ENCODE measurements at regions of chr19 and their contacts with region 1.

Region 1: GRCh38 chr19:12156223-12157058 is at the start of gene ZNF625:
- DNase-seq: peak; percentile 51
- ATAC-seq: peak; percentile 88
- H3K4me3 ChIP-seq: peak within 1 kb of the TSS; percentile 44 to 95 (median 83)
- H3K4me3 Mint-ChIP-seq: peak within 1 kb of the TSS; percentile 95
- H3K27ac ChIP-seq: peak within 1 kb of the TSS; percentile 54 to 72
- H3K27ac Mint-ChIP-seq: peak within 1 kb of the TSS; percentile 80
- H3K4me1 ChIP-seq: peaks cover 7 to 11% of the 10 kb centered on the region in 2 donors
- H3K4me1 Mint-ChIP-seq: peaks cover 13% of the 10 kb centered on the region
- H3K27me3 ChIP-seq: no peaks in the 10 kb centered on the region
- H3K27me3 Mint-ChIP-seq: no peaks in the 10 kb centered on the region
- CTCF ChIP-seq: no peak
- total RNA-seq, gene ZNF625: 6.6 and 9.8 TPM in 2 replicates

Region 2: DNA sequence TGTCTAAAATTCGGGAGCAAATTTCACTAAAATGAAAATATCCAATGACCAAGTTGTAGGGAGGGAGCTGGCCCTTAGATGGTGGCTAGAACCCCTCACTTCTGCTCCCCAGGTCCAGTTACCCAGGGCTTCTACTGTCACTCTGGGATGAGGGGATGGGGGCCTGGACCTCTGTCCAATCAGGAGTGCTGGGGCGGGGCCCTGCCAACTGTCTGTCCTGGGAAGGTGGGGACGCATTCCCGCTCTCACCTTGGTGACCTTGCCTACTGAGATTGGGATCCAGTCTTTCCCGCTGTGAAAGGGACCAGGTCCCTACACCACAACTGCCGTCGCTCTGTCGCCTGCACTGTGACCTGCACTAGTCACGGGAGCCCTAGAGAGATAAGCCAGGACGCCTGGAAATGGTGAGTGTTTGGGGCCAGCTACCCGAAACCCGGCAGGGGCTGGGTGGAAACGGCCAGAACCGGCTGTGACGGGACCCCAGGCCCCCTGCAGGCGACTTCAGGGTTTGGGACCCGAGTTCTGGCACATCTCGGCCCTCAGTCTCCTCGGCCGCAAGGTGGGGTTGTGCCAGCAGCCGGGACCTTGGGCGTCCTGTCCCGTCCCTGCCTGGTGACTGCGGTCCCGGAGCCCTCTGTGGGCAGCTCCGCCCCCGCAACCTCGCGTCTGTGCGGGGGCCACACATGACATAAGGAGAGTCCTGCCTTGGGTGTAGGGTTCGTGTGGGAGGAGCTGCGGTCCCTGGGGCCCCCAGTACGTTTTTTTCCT is 39.1 kb before region 1 on chr19:
- CTCF ChIA-PET with region 1: no interaction called
- POLR2A ChIA-PET with region 1: interaction called, 11 read pairs
- intact Hi-C with region 1: no loop called
- DNase-seq: no peak
- ATAC-seq: no peak
- H3K4me3 ChIP-seq: no peak overlapping the region
- H3K4me3 Mint-ChIP-seq: no peak overlapping the region
- H3K27ac ChIP-seq: no peak overlapping the region
- H3K27ac Mint-ChIP-seq: no peak overlapping the region
- H3K4me1 ChIP-seq: no peaks in the 10 kb centered on the region
- H3K4me1 Mint-ChIP-seq: no peaks in the 10 kb centered on the region
- H3K27me3 ChIP-seq: no peaks in the 10 kb centered on the region
- H3K27me3 Mint-ChIP-seq: no peaks in the 10 kb centered on the region
- CTCF ChIP-seq: no peak

Region 3: GRCh38 chr19:12346896-12347295 is 190.5 kb after region 1 on chr19:
- CTCF ChIA-PET with region 1: no interaction called
- POLR2A ChIA-PET with region 1: no interaction called
- intact Hi-C with region 1: no loop called
- DNase-seq: peak; percentile 61
- ATAC-seq: peak; percentile 36
- H3K4me3 ChIP-seq: no peak overlapping the region
- H3K4me3 Mint-ChIP-seq: no peak overlapping the region
- H3K27ac ChIP-seq: no peak overlapping the region
- H3K27ac Mint-ChIP-seq: no peak overlapping the region
- H3K4me1 ChIP-seq: no peaks in the 10 kb centered on the region
- H3K4me1 Mint-ChIP-seq: no peaks in the 10 kb centered on the region
- H3K27me3 ChIP-seq: no peaks in the 10 kb centered on the region
- H3K27me3 Mint-ChIP-seq: no peaks in the 10 kb centered on the region
- CTCF ChIP-seq: peak; percentile 47